ENCODE measurements at regions of chr4 and their contacts with region 1.

Region 1: DNA sequence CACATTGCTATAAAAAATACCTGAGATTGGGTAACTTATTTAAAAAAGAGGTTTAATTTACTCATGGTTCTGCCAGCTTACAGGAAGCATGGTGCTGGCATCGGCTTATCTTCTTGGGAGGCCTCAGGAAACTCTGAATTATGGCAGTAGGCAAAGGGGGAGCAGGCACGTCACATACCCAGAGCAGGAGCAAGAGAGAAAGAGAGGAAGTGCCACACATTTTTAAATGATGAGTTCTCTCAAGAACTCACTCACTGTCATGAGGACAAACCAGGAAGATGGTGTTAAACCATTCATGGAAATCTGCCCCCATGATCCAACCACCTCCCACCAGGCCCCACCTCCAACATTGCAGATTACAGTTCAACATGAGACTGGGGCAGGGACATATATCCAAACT is 10.0 kb upstream of the AFF1 start:
- DNase-seq: no peak
- ATAC-seq: no peak
- H3K4me3 ChIP-seq: no peak overlapping the region
- H3K27ac ChIP-seq: no peak overlapping the region
- H3K4me1 ChIP-seq: no peaks in the 10 kb centered on the region
- H3K27me3 ChIP-seq: no peaks in the 10 kb centered on the region

Region 2: GRCh38 chr4:87006676-87007527 is 82.1 kb after region 1 on chr4:
- intact Hi-C with region 1: no loop called
- DNase-seq: peak; percentile 95 to 97
- ATAC-seq: peak; percentile 97
- H3K4me3 ChIP-seq: peak overlapping the region; percentile 24 to 94
- H3K27ac ChIP-seq: peak overlapping the region; percentile 74 to 78
- H3K4me1 ChIP-seq: no peaks in the 10 kb centered on the region
- H3K27me3 ChIP-seq: no peaks in the 10 kb centered on the region

Region 3: DNA sequence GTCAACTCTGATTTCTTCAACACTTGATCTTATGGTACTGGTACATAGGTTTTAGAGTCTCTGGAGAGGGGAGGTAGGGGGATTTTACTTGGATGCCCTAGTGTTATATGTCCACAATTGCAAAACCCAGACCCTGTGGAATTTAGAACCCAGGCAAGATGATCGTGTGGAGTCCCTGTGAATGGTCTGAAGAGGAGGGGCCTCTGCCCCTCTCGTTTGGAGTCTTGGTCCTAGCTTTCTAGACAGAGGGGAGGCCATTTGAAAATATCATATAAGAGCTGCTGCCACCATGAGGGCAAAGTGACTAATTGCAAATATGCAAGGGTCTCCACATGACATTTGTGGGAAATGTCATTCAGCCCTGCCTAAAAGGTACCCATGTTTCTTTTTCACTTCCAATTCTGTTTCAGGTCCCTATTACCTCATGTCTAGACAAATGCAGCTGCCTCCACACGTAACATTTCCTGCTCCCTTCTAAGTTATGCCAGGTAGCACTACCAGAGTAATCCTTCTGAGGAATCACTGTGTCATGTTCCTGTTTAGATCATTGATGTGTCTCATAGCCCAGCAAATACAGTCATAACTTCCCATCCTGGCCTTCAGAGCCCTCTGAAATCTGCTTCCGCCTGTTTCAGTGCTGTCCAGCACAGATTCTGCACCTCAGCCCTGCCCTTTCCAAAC is 168.8 kb after region 1 on chr4:
- intact Hi-C with region 1: loop called (anchors 2 kb)
- DNase-seq: no peak
- ATAC-seq: peak; percentile 77
- H3K4me3 ChIP-seq: no peak overlapping the region
- H3K27ac ChIP-seq: no peak overlapping the region
- H3K4me1 ChIP-seq: peaks cover 0 to 2% of the 10 kb centered on the region in 2 donors
- H3K27me3 ChIP-seq: no peaks in the 10 kb centered on the region

Region 4: DNA sequence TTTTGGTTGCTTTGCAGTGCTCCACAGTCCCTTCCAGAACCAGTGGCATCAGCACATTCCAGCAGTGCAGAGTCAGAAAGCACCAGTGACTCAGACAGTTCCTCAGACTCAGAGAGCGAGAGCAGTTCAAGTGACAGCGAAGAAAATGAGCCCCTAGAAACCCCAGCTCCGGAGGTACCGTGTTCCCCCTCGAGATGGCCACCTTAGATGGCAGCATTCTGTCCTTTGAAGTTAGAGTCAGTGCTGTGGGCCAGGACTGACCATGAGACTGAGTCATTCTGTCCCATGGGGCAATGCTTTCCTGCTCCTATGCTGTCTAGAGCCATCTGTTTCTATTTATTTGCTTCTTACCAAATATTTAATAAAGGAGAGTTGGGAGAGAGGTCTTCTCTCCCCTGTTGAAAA is 183.3 kb after region 1 on chr4:
- intact Hi-C with region 1: loop called in 1 of 2 experiments (anchors 5 kb)
- DNase-seq: peak in 1 of 2 donors; percentile 65
- ATAC-seq: peak; percentile 90
- H3K4me3 ChIP-seq: no peak overlapping the region
- H3K27ac ChIP-seq: peak overlapping the region; percentile 34 to 96
- H3K4me1 ChIP-seq: peaks cover 0 to 6% of the 10 kb centered on the region in 2 donors
- H3K27me3 ChIP-seq: no peaks in the 10 kb centered on the region

Region 5: GRCh38 chr4:87235020-87235671 is 310.3 kb after region 1 on chr4:
- intact Hi-C with region 1: loop called (anchors 5 kb)
- DNase-seq: no peak
- ATAC-seq: no peak
- H3K4me3 ChIP-seq: peak overlapping the region in 1 of 2 donors; percentile 79
- H3K27ac ChIP-seq: no peak overlapping the region
- H3K4me1 ChIP-seq: no peaks in the 10 kb centered on the region
- H3K27me3 ChIP-seq: no peaks in the 10 kb centered on the region